GM12878 (cell line): ENCODE measurements at regions of chr1 and their contacts with region 1.

Region 1: GRCh38 chr1:224644553-224645154 is 28.5 kb downstream of the CNIH3 start:
- DNase-seq: peak; percentile 24
- ATAC-seq: peak; percentile 85
- H3K4me3 ChIP-seq: no peak overlapping the region
- H3K27ac ChIP-seq: no peak overlapping the region
- H3K4me1 ChIP-seq: no peaks in the 10 kb centered on the region
- H3K27me3 ChIP-seq: no peaks in the 10 kb centered on the region; a peak in 1 of 4 replicates
- CTCF ChIP-seq: peak; percentile 84 to 91 (median 90)
- EP300 ChIP-seq: no peak
- POLR2A ChIP-seq: no peak
- RAD21 ChIP-seq: peak; percentile 84

Region 2: DNA sequence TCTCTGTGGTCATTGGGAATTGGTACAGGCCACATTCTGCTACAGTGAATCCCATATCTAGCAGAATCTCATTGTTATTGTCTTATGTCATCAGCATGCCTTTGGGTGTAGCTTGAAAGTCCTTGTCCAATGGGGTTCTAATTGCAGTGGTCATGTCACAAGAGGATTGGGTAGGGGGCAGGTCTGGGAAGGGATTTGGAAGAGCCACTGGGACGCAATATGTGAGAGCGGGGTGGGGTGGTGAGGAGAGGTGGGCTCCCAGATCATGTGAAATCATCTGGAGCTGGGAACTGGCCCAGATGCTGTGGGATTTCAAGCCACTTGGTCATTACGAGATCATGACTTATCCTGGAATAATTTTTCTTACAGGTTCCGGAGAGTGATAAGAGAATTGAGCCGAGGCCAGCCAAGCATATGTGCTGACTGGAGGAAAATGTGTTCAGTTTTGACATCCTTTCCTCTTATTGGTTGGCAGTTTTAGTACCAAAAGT is 12.2 kb before region 1 on chr1:
- CTCF ChIA-PET with region 1: interaction called, 15 read pairs
- POLR2A ChIA-PET with region 1: no interaction called
- RAD21 ChIA-PET with region 1: interaction called, 3 read pairs
- SMC1A ChIA-PET with region 1: interaction called, 14 read pairs
- in situ Hi-C with region 1: no loop called
- intact Hi-C with region 1: no loop called
- DNase-seq: no peak
- ATAC-seq: no peak
- H3K4me3 ChIP-seq: no peak overlapping the region
- H3K27ac ChIP-seq: no peak overlapping the region
- H3K4me1 ChIP-seq: no peaks in the 10 kb centered on the region
- H3K27me3 ChIP-seq: peaks cover 0 to 3% of the 10 kb centered on the region in 2 experiments; a peak in 1 of 4 replicates
- CTCF ChIP-seq: no peak
- EP300 ChIP-seq: no peak
- POLR2A ChIP-seq: no peak
- RAD21 ChIP-seq: no peak

Region 3: DNA sequence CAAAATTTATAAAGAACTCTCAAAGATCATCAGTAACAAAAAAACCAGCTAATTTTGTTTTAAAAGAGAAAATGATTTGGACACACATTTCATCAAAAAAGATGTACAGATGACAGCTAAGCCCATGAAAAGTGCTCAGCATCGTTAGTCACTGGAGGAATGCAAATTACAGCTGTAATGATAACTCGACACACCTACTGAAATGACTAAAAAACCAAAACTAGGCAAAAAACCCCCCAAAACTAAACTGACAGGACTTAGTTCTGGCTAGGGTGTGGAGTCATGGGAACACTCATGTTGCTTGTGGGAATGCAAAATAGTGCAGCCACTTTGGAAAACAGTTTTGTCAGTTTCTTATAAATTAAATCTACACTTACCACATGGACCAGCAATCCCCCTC is 30.9 kb after region 1 on chr1:
- CTCF ChIA-PET with region 1: interaction called, 11 read pairs
- POLR2A ChIA-PET with region 1: no interaction called
- RAD21 ChIA-PET with region 1: interaction called, 4 read pairs
- SMC1A ChIA-PET with region 1: interaction called, 6 read pairs
- in situ Hi-C with region 1: no loop called
- intact Hi-C with region 1: no loop called
- DNase-seq: no peak
- ATAC-seq: peak; percentile 73
- H3K4me3 ChIP-seq: no peak overlapping the region
- H3K27ac ChIP-seq: no peak overlapping the region
- H3K4me1 ChIP-seq: peaks cover 3% of the 10 kb centered on the region; the same call in 1 of the 2 replicates
- H3K27me3 ChIP-seq: no peaks in the 10 kb centered on the region; a peak in 1 of 4 replicates
- CTCF ChIP-seq: no peak
- EP300 ChIP-seq: no peak; a peak in 1 of 4 replicates
- POLR2A ChIP-seq: no peak
- RAD21 ChIP-seq: no peak

Region 4: DNA sequence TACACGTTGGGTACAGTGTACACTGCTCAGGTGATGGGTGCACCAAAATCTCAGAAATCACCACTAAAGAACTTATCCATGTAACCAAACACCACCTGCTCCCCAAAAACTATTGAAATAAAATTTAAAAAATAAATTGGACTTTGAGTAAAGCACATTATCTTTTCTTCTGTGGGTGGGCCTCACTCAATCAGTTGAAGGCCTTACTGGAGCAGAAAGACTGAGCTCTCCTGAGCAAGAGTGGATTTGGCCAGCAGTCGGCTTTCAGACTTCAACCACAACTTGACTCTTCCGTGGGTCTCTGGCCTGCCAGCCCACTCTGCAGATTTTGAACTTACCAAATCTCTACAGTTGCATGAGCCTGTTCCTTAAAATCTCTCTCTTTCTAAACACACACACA is 50.3 kb after region 1 on chr1:
- CTCF ChIA-PET with region 1: no interaction called
- POLR2A ChIA-PET with region 1: no interaction called
- RAD21 ChIA-PET with region 1: no interaction called
- SMC1A ChIA-PET with region 1: no interaction called
- in situ Hi-C with region 1: no loop called
- intact Hi-C with region 1: loop called (anchors 2 kb)
- DNase-seq: no peak
- ATAC-seq: no peak
- H3K4me3 ChIP-seq: no peak overlapping the region
- H3K27ac ChIP-seq: no peak overlapping the region
- H3K4me1 ChIP-seq: no peaks in the 10 kb centered on the region
- H3K27me3 ChIP-seq: no peaks in the 10 kb centered on the region
- CTCF ChIP-seq: no peak
- EP300 ChIP-seq: no peak
- POLR2A ChIP-seq: no peak
- RAD21 ChIP-seq: no peak